PC-9 (cell line): ENCODE measurements at regions of chr19 and their contacts with region 1.

Region 1: GRCh38 chr19:15555759-15556633 is 47.7 kb downstream of the CYP4F22 start:
- DNase-seq: peak; percentile 92 to 94
- H3K4me3 ChIP-seq: peak overlapping the region; percentile 52; the same call in 1 of the 2 replicates
- H3K27ac ChIP-seq: no peak overlapping the region
- H3K4me1 ChIP-seq: peaks cover 12% of the 10 kb centered on the region
- H3K27me3 ChIP-seq: no peaks in the 10 kb centered on the region
- CTCF ChIP-seq: peak; percentile 78

Region 2: GRCh38 chr19:14871619-14872230 is 684.3 kb before region 1 on chr19:
- CTCF ChIA-PET with region 1: no interaction called
- POLR2A ChIA-PET with region 1: no interaction called
- intact Hi-C with region 1: loop called (anchors 1 kb)
- DNase-seq: peak; percentile 0 to 59
- H3K4me3 ChIP-seq: no peak overlapping the region
- H3K27ac ChIP-seq: no peak overlapping the region
- H3K4me1 ChIP-seq: peaks cover 6% of the 10 kb centered on the region; the same call in 1 of the 2 replicates
- H3K27me3 ChIP-seq: no peaks in the 10 kb centered on the region
- CTCF ChIP-seq: peak; percentile 91

Region 3: DNA sequence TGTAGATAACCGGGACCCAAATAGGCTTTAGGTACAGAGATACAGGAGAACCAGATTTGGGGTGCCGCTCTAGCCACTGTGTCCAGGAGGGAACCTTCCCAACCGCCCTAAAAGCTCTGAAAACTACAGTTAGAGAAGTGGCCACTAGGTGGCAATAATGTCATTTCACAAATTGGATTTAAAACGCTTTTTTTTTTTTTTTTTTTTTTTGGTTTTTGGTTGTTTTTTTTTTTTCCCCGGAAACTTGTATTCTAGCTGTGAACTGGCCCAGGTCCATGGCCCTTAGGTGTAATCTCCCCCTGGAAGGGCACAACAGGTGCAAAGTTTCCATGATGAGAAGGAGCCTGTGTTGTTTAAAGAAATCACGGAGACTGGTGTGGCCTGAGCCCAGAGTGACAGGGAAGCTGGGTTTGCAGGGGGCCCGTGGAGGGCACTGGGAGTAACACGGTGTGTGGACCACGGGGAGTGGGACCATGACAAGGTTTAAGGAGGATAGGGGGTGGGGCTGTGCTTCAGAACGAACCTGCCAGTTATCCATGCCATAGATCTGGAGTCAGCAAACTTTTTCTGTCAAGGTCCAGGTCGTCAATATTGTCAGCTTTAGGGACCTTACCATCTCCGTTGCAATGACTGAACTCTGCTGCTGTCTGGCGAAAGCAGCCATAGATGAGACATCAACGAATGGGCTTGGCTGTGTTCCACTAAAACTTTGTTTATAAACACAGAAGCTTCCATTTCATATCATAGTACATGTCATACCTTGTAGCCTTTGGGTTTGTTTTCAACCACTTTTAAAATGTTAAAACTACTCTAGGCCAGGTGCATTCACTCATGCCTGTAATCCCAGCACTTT is 463.9 kb before region 1 on chr19:
- CTCF ChIA-PET with region 1: interaction called, 4 read pairs
- POLR2A ChIA-PET with region 1: no interaction called
- intact Hi-C with region 1: loop called (anchors 1 kb)
- DNase-seq: peak; percentile 38 to 74
- H3K4me3 ChIP-seq: no peak overlapping the region
- H3K27ac ChIP-seq: no peak overlapping the region
- H3K4me1 ChIP-seq: peaks cover 18% of the 10 kb centered on the region
- H3K27me3 ChIP-seq: no peaks in the 10 kb centered on the region
- CTCF ChIP-seq: peak; percentile 88

Region 4: DNA sequence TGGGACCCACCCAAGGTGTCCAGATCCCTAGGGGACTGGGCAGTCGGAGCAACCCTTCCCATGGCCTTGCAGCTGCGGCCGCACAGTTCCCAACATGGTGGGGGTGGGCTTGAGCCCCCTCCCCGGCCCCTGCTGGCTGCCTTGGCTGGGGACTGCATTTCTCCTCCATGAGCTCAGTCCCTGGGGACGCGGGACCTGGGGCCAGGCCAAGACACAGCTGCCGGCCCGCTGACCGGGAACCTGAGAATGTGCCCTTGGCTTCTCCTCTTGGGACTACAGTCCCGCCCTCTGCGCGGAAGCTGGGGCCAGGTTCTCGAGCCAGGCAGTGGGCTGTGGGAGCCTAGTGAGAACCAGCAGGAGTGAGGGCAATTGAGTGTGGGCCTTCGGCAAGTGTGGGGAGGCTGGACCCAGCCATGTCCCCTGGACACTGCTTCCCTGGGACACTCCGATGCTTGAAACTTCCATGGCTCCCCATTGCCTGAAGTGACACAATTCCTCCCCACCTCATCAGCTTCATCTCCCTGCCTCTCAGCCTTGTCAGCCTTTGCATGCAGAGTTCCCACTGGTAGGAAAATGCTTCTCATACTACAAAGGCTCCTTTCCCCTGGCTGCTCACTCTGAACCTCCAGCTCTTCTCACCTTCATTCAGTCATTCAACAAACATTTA is 342.1 kb before region 1 on chr19:
- CTCF ChIA-PET with region 1: interaction called, 15 read pairs
- POLR2A ChIA-PET with region 1: no interaction called
- intact Hi-C with region 1: no loop called
- DNase-seq: no peak
- H3K4me3 ChIP-seq: no peak overlapping the region
- H3K27ac ChIP-seq: no peak overlapping the region
- H3K4me1 ChIP-seq: peaks cover 52% of the 10 kb centered on the region
- H3K27me3 ChIP-seq: no peaks in the 10 kb centered on the region
- CTCF ChIP-seq: no peak

Region 5: DNA sequence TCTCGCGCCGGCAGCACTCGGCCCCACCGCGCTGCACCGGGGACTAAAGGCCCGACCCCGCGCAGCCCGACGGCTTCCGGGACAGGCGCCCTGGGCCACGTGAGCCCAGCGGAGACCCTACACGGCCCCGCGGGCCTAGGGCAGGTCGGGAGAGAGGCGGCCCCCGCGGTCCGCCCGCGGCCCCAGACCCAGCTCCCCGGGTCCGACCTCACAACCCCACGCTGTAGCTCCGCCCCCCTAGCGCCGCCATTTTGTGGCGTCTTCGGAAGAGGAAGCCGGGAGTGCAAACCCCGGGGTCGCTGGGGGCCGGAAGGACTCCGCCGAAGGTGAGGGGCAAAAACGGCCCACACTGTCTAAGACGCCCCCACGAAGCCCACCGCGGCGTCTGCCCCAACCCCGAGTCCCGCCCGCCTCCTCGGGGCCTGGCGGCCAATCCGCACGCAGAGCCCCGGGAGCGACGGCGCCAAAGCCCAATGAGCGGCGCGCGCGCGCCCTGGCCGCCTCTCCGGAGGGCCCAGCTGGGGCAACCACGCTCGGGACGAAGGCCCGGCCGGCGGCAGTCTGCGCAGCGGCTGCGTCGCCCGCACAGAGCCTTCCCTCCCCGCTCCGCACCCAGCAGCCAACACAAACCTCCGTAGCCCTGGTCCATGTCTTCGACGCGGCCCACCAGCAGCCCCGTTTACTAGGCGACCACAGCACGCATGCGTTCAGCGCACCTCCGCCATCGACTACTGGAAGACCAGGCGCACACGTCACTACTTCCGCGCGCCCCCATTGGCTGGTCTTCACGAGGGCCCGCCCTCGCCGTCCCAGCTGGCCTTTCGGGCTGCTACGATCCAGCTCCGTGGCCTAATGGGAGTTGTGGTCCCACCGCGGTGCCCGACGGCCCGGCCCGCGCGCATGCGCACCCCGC is 176.7 kb before region 1 on chr19 and contains the start of gene AKAP8:
- CTCF ChIA-PET with region 1: interaction called, 4 read pairs
- POLR2A ChIA-PET with region 1: no interaction called
- intact Hi-C with region 1: loop called (anchors 1 kb)
- DNase-seq: peak; percentile 97 to 98
- H3K4me3 ChIP-seq: peak within 1 kb of the TSS; percentile 78
- H3K27ac ChIP-seq: peak within 1 kb of the TSS; percentile 87
- H3K4me1 ChIP-seq: peaks cover 22% of the 10 kb centered on the region
- H3K27me3 ChIP-seq: no peaks in the 10 kb centered on the region
- CTCF ChIP-seq: no peak
- total RNA-seq, gene AKAP8: 39.5 and 43.4 TPM in 2 replicates

Region 6: DNA sequence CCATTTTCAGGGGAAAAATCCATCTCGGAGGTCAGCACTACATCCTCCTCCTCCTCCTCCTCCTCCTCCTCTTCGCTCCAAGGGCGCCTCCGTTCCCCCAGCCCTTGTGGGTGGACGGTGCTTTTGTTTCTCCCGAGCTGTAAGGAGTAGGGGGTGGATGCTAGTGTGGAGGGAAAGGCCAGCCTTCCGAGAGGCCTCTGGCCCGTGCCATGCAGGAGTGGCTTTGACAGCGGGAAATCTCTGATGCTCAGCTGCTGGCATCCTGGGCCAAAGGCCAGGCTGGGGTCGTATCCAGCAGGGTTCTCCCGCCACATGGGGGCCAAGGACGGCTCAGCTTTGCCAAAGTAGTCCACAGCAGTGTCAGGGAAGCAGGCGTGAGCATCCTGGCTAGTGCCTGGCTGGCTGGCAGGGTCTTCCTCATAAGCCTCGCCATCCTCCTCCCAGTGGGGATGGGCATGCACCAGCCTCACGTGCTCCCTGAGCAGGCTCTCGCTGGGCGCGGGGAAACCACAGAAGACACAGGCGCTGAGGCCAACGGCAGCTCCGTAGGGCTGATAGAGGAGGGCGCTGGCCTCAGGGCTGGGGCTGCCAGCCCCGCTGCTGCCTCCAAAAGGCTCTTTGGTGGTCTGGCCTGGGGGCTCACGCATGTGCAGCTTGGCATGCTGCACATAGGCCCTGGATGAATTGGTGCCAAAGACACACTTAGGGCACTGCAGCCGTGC is 116.8 kb before region 1 on chr19:
- CTCF ChIA-PET with region 1: no interaction called
- POLR2A ChIA-PET with region 1: no interaction called
- intact Hi-C with region 1: no loop called
- DNase-seq: no peak
- H3K4me3 ChIP-seq: no peak overlapping the region
- H3K27ac ChIP-seq: no peak overlapping the region
- H3K4me1 ChIP-seq: 0 out of 2 replicates have a peak, but pooled peaks cover 5% of the 10 kb centered on the region
- H3K27me3 ChIP-seq: no peaks in the 10 kb centered on the region
- CTCF ChIP-seq: no peak

Region 7: DNA sequence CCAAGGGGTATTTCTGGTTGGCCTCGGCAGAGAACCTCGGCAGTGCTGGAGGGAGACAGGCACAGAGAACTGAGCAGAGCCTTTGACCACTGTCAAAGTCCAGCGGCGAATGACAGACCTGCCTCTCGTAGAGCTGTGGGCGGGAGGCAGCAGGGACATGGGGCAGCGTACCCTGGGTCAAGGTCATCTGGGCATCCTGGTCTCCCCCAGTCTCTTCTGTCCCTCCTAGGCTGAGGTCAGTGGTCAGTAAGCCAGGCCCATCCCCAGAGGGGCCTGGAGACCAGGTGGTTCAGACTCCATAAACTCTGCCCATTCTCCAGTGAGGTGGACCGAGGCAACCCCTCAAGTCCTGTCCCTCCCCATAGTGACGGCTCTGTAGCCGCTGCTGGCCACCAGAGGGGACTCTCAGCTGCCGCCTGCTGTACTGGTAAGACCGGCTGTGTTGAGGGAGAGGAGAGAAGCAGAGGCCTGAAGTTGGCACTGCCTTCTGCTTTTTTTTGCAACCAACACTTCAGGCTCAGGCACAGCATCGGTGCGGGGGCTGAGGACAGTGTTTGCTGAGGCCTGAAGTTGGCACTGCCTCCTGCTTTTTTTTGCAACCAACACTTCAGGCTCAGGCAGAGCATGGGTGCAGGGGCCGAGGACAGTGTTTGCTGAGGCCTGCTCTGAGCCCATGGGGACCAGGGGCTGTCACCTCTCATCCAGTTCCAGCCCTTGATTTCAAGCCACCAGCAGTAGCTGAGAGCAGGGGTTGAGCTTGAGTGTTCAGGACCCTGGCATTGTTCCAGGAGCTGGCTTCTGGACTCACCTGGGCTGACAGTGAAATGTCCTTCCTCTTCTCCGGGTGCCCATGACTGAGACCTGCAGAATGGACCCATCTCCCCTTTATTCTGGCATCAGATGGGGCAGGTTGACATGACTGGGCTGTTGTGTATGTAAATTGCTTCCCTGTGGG is 76.3 kb before region 1 on chr19 and contains the start of gene PGLYRP2:
- CTCF ChIA-PET with region 1: interaction called, 3 read pairs
- POLR2A ChIA-PET with region 1: no interaction called
- intact Hi-C with region 1: loop called (anchors 1 kb)
- DNase-seq: peak; percentile 43 to 56
- H3K4me3 ChIP-seq: no peak within 1 kb of the TSS
- H3K27ac ChIP-seq: no peak within 1 kb of the TSS
- H3K4me1 ChIP-seq: no peaks in the 10 kb centered on the region
- H3K27me3 ChIP-seq: no peaks in the 10 kb centered on the region
- CTCF ChIP-seq: peak; percentile 59
- total RNA-seq, gene PGLYRP2: not detected in 2 replicates

Region 8: GRCh38 chr19:15584541-15585115 is 28.6 kb after region 1 on chr19:
- CTCF ChIA-PET with region 1: no interaction called
- POLR2A ChIA-PET with region 1: no interaction called
- intact Hi-C with region 1: no loop called
- DNase-seq: peak; percentile 68 to 78
- H3K4me3 ChIP-seq: no peak overlapping the region
- H3K27ac ChIP-seq: no peak overlapping the region
- H3K4me1 ChIP-seq: no peaks in the 10 kb centered on the region
- H3K27me3 ChIP-seq: peaks cover 19% of the 10 kb centered on the region
- CTCF ChIP-seq: peak; percentile 95